ENCODE measurements at regions of chr17 and their contacts with region 1.

Region 1: DNA sequence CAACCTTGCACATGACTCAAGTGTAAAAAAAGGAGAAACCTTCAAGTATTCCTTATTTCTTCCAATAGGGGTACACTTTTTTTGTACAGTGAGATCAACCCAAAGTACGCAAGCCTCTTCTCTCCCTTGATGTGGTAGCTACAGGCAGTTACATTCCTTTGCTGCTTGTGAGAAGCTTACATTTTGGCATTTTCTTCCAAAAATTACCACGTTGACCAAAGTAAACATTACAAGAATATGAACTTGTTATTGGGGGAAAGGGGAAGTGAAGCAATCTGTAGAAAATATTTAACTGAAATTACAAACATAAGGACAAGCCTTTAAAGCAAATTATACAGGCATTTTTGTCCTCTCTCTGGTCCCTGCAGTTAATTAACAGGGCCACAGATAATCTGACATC is 97.0 kb upstream of the TOB1 start:
- DNase-seq: no peak
- ATAC-seq: no peak
- H3K4me3 ChIP-seq: no peak overlapping the region
- H3K27ac ChIP-seq: no peak overlapping the region
- H3K4me1 ChIP-seq: no peaks in the 10 kb centered on the region
- H3K27me3 ChIP-seq: no peaks in the 10 kb centered on the region
- CTCF ChIP-seq: no peak

Region 2: GRCh38 chr17:50828508-50829170 is 134.5 kb before region 1 on chr17:
- CTCF ChIA-PET with region 1: no interaction called
- POLR2A ChIA-PET with region 1: no interaction called
- intact Hi-C with region 1: no loop called
- DNase-seq: no peak
- ATAC-seq: no peak; the same call in 1 of the 2 replicates
- H3K4me3 ChIP-seq: no peak overlapping the region
- H3K27ac ChIP-seq: no peak overlapping the region
- H3K4me1 ChIP-seq: no peaks in the 10 kb centered on the region
- H3K27me3 ChIP-seq: peaks cover 4% of the 10 kb centered on the region; the same call in 1 of the 2 replicates
- CTCF ChIP-seq: no peak

Region 3: GRCh38 chr17:51000835-51001638 is 37.9 kb after region 1 on chr17:
- CTCF ChIA-PET with region 1: no interaction called
- POLR2A ChIA-PET with region 1: no interaction called
- intact Hi-C with region 1: no loop called
- DNase-seq: peak; percentile 86
- ATAC-seq: peak; percentile 80
- H3K4me3 ChIP-seq: no peak overlapping the region
- H3K27ac ChIP-seq: no peak overlapping the region
- H3K4me1 ChIP-seq: no peaks in the 10 kb centered on the region
- H3K27me3 ChIP-seq: no peaks in the 10 kb centered on the region
- CTCF ChIP-seq: peak; percentile 90

Region 4: DNA sequence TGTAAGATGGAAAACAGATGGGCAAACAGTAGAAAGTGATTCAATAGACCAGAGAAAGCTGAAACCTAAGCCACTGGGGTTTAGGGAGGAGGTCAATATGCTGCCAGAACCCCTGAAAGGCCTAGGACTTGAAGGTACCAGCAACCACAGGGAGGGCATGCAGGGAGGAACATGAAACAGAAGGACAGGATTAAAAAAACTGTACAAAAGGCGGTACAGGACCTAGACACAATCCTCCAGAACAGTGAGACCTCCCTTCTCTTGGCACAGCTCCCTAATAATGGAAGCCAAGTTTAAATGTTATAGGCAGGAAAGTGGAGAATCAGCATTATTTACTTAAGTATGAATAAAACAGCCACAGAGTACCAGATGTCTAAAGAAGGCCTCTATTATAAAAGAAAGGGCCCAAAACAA is 52.0 kb after region 1 on chr17:
- CTCF ChIA-PET with region 1: no interaction called
- POLR2A ChIA-PET with region 1: no interaction called
- intact Hi-C with region 1: loop called (anchors 5 kb)
- DNase-seq: peak; percentile 50
- ATAC-seq: peak; percentile 85
- H3K4me3 ChIP-seq: no peak overlapping the region
- H3K27ac ChIP-seq: no peak overlapping the region
- H3K4me1 ChIP-seq: peaks cover 10% of the 10 kb centered on the region; the same call in 1 of the 2 replicates
- H3K27me3 ChIP-seq: no peaks in the 10 kb centered on the region
- CTCF ChIP-seq: no peak

Measured in PC-3 (cell line).